Activated T-helper 1 cell treated with anti-CD3 and anti-CD28 coated beads, Interleukin-12 subunit alpha, Interleukin-12 subunit beta, Interleukin-2, Interleukin-4 antibody, amounts not matched to agents 30 ng/mL and 10 ng/mL and 1 ng/mL, durations not matched to agents 14 hours and 24 hours and 36 hours (primary cell): ENCODE measurements at regions of chr1 and their contacts with region 1.

Region 1: GRCh38 chr1:145845514-145846161 is at the start of gene NUDT17:
- DNase-seq: peak; percentile 62
- H3K4me3 Mint-ChIP-seq: peak within 1 kb of the TSS; percentile 9
- H3K27ac Mint-ChIP-seq: peak within 1 kb of the TSS; percentile 67
- H3K4me1 Mint-ChIP-seq: peaks cover 6% of the 10 kb centered on the region
- H3K27me3 Mint-ChIP-seq: no peaks in the 10 kb centered on the region
- total RNA-seq, gene NUDT17: 3.0 TPM in 2 replicates

Region 2: DNA sequence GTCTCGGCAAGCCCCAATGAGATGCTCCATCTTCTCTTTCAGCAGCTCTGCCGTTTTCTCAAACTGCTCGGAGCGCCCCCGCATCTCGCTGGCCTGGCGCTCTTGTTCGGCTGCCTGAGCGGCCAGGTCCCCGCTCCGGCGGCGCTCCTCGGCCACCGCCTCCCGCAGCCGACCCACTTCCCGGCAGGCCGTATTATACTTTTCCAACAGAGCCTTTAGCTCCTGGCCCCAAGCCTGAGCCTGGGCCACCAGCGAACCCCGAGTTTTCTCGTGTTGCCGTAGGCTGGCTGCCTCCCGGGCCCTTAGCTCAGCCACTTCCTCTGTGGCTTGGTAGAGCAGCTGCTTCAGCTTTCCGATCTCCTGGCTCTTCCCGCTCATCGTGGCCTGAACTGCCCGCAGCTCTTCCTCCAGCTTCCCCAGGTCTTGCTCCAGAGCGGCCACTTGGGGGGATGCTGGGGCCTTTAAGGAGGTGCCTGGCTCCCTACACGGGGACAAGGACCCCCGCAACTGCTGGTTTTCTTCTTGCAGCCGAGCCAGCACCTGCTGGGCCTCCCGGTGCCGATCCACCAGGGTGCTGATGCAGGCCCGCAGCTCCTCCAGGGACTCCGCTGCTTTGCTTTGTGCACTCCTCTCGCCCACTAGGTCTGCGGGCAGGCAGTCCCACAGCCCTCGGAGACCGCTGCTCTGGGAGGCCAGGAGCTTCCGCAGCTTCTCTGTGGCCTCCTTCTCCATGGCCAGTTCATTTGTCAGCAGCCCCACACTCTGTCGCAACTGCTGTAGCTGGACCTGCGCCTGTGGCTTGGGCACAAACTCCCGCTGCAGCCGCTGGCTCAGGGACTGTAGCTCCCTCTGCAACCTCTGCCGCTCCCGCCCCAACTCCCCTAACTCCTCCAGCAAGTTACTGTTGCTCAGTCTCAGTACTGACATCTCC is 26.6 kb after region 1 on chr1:
- intact Hi-C with region 1: loop called (anchors 2 kb)
- DNase-seq: peak; percentile 30
- H3K4me3 Mint-ChIP-seq: peak overlapping the region; percentile 58
- H3K27ac Mint-ChIP-seq: peak overlapping the region; percentile 78
- H3K4me1 Mint-ChIP-seq: peaks cover 16% of the 10 kb centered on the region
- H3K27me3 Mint-ChIP-seq: peaks cover 43% of the 10 kb centered on the region

Region 3: DNA sequence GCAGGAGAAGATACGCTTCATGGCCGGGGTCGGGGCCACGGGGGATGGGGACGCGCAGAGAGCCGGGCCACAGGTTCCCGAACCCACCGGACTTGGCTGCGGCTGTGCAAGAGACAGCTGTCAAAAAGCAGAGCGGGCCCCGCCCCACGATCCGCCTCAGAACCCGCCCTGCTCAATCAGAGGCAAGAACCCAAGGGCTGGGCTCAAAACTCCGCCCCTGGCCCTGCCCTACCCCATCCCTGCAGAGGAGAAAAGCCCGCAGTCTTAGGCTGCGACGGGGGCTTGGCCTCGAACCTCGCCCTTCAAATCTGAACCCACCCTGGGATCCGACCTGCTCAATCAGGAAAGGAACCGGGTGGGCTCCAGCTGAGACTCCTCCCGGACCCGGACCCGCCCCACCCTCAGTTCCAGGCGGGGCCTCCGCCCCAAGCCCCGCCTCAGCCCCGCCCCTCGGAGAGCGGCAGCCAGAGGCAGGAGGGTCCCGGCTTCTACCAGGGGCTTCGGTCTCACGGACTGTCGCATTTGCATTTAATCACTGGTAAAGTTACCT is 40.2 kb after region 1 on chr1 and contains the start of gene ANKRD35:
- intact Hi-C with region 1: loop called (anchors 2 kb)
- DNase-seq: peak; percentile 84
- H3K4me3 Mint-ChIP-seq: peak within 1 kb of the TSS; percentile 78
- H3K27ac Mint-ChIP-seq: no peak within 1 kb of the TSS
- H3K4me1 Mint-ChIP-seq: peaks cover 25% of the 10 kb centered on the region
- H3K27me3 Mint-ChIP-seq: peaks cover 35% of the 10 kb centered on the region
- total RNA-seq, gene ANKRD35: 0.37 and 0.52 TPM in 2 replicates

Region 4: GRCh38 chr1:145906954-145907753 is 61.5 kb after region 1 on chr1:
- intact Hi-C with region 1: loop called (anchors 1 kb)
- DNase-seq: no peak
- H3K4me3 Mint-ChIP-seq: no peak overlapping the region
- H3K27ac Mint-ChIP-seq: no peak overlapping the region
- H3K4me1 Mint-ChIP-seq: peaks cover 5% of the 10 kb centered on the region
- H3K27me3 Mint-ChIP-seq: no peaks in the 10 kb centered on the region

Region 5: GRCh38 chr1:145918144-145918992 is 72.7 kb after region 1 on chr1 and contains the start of gene PEX11B:
- intact Hi-C with region 1: loop called (anchors 2 kb)
- DNase-seq: peak; percentile 87
- H3K4me3 Mint-ChIP-seq: peak within 1 kb of the TSS; percentile 88
- H3K27ac Mint-ChIP-seq: peak within 1 kb of the TSS; percentile 91
- H3K4me1 Mint-ChIP-seq: peaks cover 41% of the 10 kb centered on the region
- H3K27me3 Mint-ChIP-seq: no peaks in the 10 kb centered on the region
- total RNA-seq, gene PEX11B: 30.6 and 31.2 TPM in 2 replicates

Region 6: GRCh38 chr1:145936247-145936646 is 90.6 kb after region 1 on chr1:
- intact Hi-C with region 1: no loop called
- DNase-seq: no peak
- H3K4me3 Mint-ChIP-seq: no peak overlapping the region
- H3K27ac Mint-ChIP-seq: no peak overlapping the region
- H3K4me1 Mint-ChIP-seq: peaks cover 18% of the 10 kb centered on the region
- H3K27me3 Mint-ChIP-seq: no peaks in the 10 kb centered on the region

Region 7: DNA sequence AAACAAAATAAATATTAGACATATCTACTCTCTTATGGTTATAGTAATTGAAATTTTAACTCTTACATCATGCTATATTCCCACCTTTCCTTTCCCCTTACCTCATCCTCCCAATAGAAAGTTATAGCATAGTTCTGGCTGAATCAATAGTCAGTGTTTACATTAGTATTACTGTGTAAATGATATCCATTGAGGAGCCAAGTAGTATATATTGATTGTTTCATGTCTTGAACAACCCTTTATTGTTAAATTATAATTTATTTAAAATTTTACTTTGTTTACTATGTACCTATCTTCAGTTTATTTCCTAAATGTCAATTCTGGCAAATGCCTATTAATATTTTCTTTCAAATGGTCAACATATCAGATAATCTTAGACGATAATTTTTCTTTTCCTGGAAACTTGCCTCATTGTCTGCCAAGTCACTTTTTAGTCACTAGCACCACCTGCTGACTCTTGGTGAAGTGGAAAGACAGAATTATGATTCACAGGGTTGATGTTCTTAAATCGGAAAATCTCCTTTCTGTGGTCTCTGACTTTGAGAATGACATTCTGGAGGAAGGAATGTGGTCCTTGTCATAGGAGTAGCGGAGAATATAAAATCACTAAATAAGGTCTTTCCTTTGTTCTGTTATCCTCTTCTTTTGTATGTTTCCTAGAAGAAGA is 167.2 kb after region 1 on chr1:
- intact Hi-C with region 1: loop called (anchors 1 kb)
- DNase-seq: peak; percentile 49
- H3K4me3 Mint-ChIP-seq: no peak overlapping the region
- H3K27ac Mint-ChIP-seq: no peak overlapping the region
- H3K4me1 Mint-ChIP-seq: peaks cover 13% of the 10 kb centered on the region
- H3K27me3 Mint-ChIP-seq: peaks cover 33% of the 10 kb centered on the region